ENCODE measurements at regions of chr7 and their contacts with region 1.

Region 1: GRCh38 chr7:117212969-117213877 is 109.6 kb downstream of the WNT2 start:
- DNase-seq: peak; percentile 68
- H3K4me3 ChIP-seq: no peak overlapping the region
- H3K27ac ChIP-seq: no peak overlapping the region
- H3K4me1 ChIP-seq: peaks cover 4% of the 10 kb centered on the region
- H3K27me3 ChIP-seq: no peaks in the 10 kb centered on the region
- CTCF ChIP-seq: peak; percentile 84 to 85
- POLR2A ChIP-seq: no peak

Region 2: GRCh38 chr7:116698930-116699710 is 514.1 kb before region 1 on chr7:
- CTCF ChIA-PET with region 1: no interaction called
- POLR2A ChIA-PET with region 1: no interaction called
- dilution Hi-C with region 1: no loop called
- intact Hi-C with region 1: no loop called
- DNase-seq: no peak
- H3K4me3 ChIP-seq: no peak overlapping the region
- H3K27ac ChIP-seq: no peak overlapping the region
- H3K4me1 ChIP-seq: peaks cover 19% of the 10 kb centered on the region
- H3K27me3 ChIP-seq: no peaks in the 10 kb centered on the region
- CTCF ChIP-seq: no peak
- POLR2A ChIP-seq: no peak

Region 3: DNA sequence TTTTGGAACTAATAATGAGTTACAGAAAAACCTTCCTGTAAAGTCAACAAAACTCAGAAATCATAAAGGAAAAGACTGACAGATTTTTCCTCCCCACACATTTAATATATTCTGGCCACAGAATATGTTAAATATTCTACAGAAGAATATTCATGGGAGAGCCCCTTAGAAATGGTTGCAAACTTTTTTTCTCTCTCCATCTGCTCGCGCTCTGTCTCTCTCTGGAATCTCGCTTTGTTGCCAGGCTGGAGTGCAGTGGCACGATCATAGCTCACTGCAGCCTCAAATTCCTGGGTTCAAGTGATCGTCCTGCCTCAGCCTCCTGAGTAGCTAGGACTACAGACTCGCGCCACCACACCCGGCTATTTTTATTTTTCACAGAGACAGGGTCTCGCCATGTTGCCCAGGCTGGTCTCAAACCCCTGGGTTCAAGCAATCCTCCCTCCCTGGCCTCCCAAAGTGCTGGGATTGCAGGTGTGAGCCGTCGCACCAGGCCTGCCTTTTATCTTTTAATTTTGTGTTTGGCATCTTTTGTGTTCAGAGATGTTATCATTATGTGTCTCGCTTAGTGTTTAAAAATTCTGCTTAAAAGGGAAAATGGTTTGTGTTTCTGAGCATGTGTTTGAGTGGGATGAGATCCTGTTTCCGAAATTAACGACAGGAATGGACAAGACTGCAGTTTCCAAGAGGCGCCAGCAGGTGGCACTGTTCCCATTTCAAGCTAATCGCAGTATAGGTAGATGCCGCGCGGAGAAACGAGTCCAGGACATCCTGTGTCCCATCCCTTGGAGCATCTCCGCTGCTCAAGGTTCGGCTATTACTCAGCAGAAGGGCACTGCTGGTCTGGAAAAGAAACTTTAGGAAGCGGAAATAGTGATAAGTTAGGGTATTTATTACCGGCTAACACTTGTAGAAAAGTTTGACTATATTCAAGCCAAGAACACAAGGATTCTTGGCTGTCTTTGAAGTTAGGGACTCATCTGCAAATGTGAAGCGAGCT is 283.0 kb before region 1 on chr7:
- CTCF ChIA-PET with region 1: interaction called, 8 read pairs
- POLR2A ChIA-PET with region 1: no interaction called
- dilution Hi-C with region 1: no loop called
- intact Hi-C with region 1: loop called (anchors 2 kb)
- DNase-seq: peak; percentile 73
- H3K4me3 ChIP-seq: no peak overlapping the region
- H3K27ac ChIP-seq: no peak overlapping the region
- H3K4me1 ChIP-seq: peaks cover 3% of the 10 kb centered on the region
- H3K27me3 ChIP-seq: peaks cover 0 to 1% of the 10 kb centered on the region in 2 experiments
- CTCF ChIP-seq: peak; percentile 85 to 93
- POLR2A ChIP-seq: no peak

Region 4: GRCh38 chr7:117157241-117158209 is 55.7 kb before region 1 on chr7:
- CTCF ChIA-PET with region 1: interaction called, 13 read pairs
- POLR2A ChIA-PET with region 1: no interaction called
- dilution Hi-C with region 1: no loop called
- intact Hi-C with region 1: no loop called
- DNase-seq: peak; percentile 85
- H3K4me3 ChIP-seq: no peak overlapping the region
- H3K27ac ChIP-seq: peak overlapping the region; percentile 4
- H3K4me1 ChIP-seq: peaks cover 17% of the 10 kb centered on the region
- H3K27me3 ChIP-seq: no peaks in the 10 kb centered on the region
- CTCF ChIP-seq: peak; percentile 24 to 47
- POLR2A ChIP-seq: no peak

Region 5: DNA sequence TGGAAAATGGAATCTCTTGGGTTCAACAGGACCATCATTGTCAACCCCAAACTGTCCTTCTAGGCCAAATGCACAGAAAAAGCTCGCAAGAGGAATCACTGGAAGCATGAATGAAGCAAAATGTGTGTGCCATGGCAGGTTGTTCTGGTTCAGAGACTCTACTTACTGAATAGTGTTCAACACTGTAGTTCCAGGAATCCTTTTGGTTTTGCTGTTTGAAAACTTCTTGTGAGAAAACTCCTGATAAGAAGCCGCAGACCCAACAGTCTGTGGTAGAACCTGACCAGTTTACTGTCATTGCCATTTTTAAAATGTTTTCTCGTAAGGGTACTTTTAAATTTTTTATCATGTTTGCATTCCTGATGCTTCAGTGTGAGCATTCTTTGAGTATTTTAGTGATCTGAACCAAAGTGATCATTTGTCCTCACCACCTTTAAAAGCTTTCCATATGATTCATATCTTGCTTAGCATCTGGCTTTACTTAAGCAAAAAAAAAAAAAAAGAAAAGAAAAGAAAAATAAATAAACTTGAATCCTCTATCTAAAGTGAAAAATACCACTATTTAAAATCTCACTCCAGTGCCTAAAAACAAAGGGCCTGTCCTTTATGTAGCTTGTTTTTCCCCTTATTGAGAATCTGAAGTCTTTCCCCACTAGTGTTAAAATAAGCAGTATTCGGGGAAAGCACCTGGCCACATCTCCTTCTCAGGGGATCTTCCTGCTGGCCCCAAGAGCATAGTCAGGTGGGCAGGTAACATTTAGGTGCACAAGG is 17.2 kb after region 1 on chr7:
- CTCF ChIA-PET with region 1: interaction called, 14 read pairs
- POLR2A ChIA-PET with region 1: no interaction called
- dilution Hi-C with region 1: no loop called
- intact Hi-C with region 1: no loop called
- DNase-seq: no peak
- H3K4me3 ChIP-seq: no peak overlapping the region
- H3K27ac ChIP-seq: no peak overlapping the region
- H3K4me1 ChIP-seq: no peaks in the 10 kb centered on the region
- H3K27me3 ChIP-seq: no peaks in the 10 kb centered on the region
- CTCF ChIP-seq: no peak
- POLR2A ChIP-seq: no peak

Region 6: GRCh38 chr7:117375380-117375779 is 162.2 kb after region 1 on chr7:
- CTCF ChIA-PET with region 1: interaction called, 36 read pairs
- POLR2A ChIA-PET with region 1: no interaction called
- dilution Hi-C with region 1: no loop called
- intact Hi-C with region 1: no loop called
- DNase-seq: no peak
- H3K4me3 ChIP-seq: no peak overlapping the region
- H3K27ac ChIP-seq: no peak overlapping the region
- H3K4me1 ChIP-seq: no peaks in the 10 kb centered on the region
- H3K27me3 ChIP-seq: no peaks in the 10 kb centered on the region
- CTCF ChIP-seq: peak in 1 of 2 donors; percentile 9
- POLR2A ChIP-seq: no peak

Region 7: DNA sequence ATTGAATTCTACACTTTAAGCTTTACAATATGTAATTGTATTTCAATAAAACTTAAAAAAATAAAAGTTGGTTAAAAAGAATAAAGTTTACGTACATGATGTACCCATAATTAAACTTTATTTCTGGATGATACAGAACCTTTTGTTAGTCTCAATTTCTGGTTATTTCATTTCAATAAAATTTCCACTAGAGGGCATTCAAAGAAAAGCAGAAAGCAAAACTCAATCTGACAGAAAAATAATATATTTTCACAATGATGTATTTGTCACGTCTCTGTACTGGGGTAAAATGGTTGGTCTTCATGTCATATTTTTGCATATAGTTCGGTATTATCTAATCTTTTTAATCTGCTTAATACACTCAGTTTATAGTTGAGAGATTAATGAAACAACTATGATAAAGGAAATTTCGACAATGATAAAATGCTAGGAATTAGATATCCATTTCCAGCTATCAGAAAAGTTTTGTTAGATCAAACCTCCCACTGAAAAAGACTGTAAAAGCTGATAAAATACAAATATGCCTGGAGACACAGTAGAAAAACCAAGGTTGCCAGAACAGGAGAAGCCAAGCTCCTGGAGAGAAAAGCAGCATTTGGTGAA is 186.7 kb after region 1 on chr7:
- CTCF ChIA-PET with region 1: interaction called, 10 read pairs
- POLR2A ChIA-PET with region 1: no interaction called
- dilution Hi-C with region 1: no loop called
- intact Hi-C with region 1: no loop called
- DNase-seq: no peak
- H3K4me3 ChIP-seq: no peak overlapping the region
- H3K27ac ChIP-seq: no peak overlapping the region
- H3K4me1 ChIP-seq: no peaks in the 10 kb centered on the region
- H3K27me3 ChIP-seq: peaks cover 4 to 6% of the 10 kb centered on the region in 2 experiments
- CTCF ChIP-seq: peak in 1 of 2 donors; percentile 13
- POLR2A ChIP-seq: no peak

Region 8: DNA sequence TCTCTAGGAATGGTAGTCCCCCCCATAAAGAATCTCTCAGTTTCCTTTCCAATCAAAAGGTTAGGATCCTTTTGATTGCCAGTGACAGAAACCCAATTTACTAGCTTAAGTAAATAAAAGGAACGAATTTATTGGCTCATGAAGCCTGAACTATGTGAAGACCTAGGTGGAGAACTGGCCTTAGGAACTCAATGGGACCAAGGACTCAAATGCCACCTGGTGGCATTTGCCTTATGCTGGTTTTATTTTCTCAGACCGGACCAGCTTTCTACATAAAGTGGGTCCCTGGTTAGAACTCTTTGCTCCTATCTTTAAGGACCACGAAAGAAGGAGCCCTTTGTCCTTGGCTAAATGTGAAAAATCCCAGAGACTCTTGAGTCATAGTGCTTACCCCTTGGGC is 292.0 kb after region 1 on chr7:
- CTCF ChIA-PET with region 1: no interaction called
- POLR2A ChIA-PET with region 1: no interaction called
- dilution Hi-C with region 1: no loop called
- intact Hi-C with region 1: no loop called
- DNase-seq: no peak
- H3K4me3 ChIP-seq: no peak overlapping the region
- H3K27ac ChIP-seq: no peak overlapping the region
- H3K4me1 ChIP-seq: no peaks in the 10 kb centered on the region
- H3K27me3 ChIP-seq: no peaks in the 10 kb centered on the region
- CTCF ChIP-seq: no peak
- POLR2A ChIP-seq: no peak

Region 9: DNA sequence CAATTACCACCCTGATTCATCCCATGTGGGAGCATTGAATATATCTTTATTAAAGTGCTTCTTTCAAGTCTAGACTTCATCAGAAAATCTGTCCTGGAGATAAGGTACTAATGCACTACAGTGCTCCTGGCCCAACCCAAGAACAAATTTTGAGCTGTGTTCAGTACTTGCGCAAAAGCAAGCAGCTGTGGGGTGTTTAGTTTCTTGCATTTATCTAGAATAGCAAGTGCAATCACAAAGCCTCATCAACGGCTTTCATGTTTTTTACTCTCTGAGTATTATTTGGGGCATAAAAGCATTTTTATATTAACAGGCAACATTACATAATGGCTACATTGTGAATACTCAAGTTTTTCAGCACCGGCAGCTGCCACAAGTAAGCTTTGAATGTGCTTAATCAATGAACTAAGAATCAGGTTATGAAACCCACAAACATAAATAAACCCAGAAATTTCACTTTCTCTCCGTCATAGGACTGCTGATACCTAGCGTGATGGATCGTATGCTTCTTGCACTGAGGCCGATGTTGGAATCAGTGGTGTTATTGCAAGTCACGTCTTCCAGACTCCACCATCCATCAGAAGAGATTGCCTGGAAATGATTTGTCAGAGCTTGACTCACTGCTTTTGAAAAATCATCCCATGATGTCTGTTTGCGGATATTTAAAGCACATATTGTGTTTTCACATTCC is 546.9 kb after region 1 on chr7:
- CTCF ChIA-PET with region 1: no interaction called
- POLR2A ChIA-PET with region 1: no interaction called
- dilution Hi-C with region 1: no loop called
- intact Hi-C with region 1: no loop called
- DNase-seq: no peak
- H3K4me3 ChIP-seq: no peak overlapping the region
- H3K27ac ChIP-seq: no peak overlapping the region
- H3K4me1 ChIP-seq: no peaks in the 10 kb centered on the region
- H3K27me3 ChIP-seq: no peaks in the 10 kb centered on the region
- CTCF ChIP-seq: no peak
- POLR2A ChIP-seq: no peak